ENCODE measurements at regions of chr5 and their contacts with region 1.

Region 1: DNA sequence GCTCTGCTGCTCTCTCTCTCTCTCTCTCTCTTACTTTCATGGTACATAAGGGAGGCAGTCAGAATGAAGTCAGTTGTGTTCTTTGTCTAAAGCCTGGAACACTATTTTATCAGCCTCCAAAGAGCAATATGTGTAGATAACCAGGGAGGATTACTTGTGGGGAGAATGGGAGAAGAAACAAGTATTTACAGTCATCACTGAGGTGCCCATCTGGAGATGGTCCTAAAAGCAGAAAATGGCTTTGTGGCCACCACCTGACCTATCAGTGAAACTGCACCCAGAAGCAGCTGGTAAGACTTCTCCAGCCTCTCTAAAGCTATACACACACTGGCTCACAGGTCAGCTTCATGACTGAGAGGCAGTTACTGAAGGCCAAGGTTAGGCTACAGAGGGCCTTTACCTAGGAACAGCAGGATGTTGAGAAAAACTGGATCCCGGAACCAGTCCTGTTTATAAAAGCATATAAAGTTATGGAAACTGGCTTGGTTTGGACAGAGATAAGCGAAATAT is 75.1 kb downstream of the MRPS27 start:
- DNase-seq: peak; percentile 54
- ATAC-seq: peak; percentile 83
- H3K4me3 ChIP-seq: no peak overlapping the region
- H3K27ac ChIP-seq: no peak overlapping the region
- H3K4me1 ChIP-seq: peaks cover 84% of the 10 kb centered on the region
- H3K27me3 ChIP-seq: no peaks in the 10 kb centered on the region
- CTCF ChIP-seq: peak; percentile 58
- EP300 ChIP-seq: no peak
- POLR2A ChIP-seq: no peak
- RAD21 ChIP-seq: 0 out of 2 replicates have a peak, but pooled peaks have one; percentile 17

Region 2: DNA sequence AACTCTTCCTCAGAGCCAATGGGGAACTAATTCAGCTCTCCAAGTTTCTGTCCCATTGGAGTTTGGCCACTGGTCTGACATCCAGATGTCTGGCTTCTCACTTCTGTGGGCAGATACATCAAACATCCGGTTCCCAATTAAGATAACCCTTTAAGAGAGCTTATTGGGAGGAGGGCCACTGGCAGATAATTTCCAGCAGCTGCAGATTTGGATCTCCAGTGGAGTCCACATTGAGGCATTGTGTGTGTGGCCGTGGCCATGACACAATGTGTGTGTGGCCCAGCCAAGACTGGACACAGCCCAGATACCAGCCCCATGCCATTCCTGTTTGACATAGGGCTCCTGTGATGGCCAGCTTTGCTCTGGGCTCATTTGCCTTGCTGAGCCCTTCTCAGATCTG is 248.1 kb before region 1 on chr5:
- CTCF ChIA-PET with region 1: no interaction called
- POLR2A ChIA-PET with region 1: no interaction called
- in situ Hi-C with region 1: no loop called
- intact Hi-C with region 1: no loop called
- DNase-seq: no peak
- ATAC-seq: no peak
- H3K4me3 ChIP-seq: no peak overlapping the region
- H3K27ac ChIP-seq: no peak overlapping the region
- H3K4me1 ChIP-seq: no peaks in the 10 kb centered on the region
- H3K27me3 ChIP-seq: no peaks in the 10 kb centered on the region; a peak in 1 of 5 replicates
- CTCF ChIP-seq: no peak
- EP300 ChIP-seq: no peak
- POLR2A ChIP-seq: no peak
- RAD21 ChIP-seq: no peak

Region 3: GRCh38 chr5:72138943-72139521 is 105.9 kb before region 1 on chr5:
- CTCF ChIA-PET with region 1: no interaction called
- POLR2A ChIA-PET with region 1: no interaction called
- in situ Hi-C with region 1: no loop called
- intact Hi-C with region 1: loop called (anchors 2 kb)
- DNase-seq: no peak
- ATAC-seq: no peak
- H3K4me3 ChIP-seq: no peak overlapping the region
- H3K27ac ChIP-seq: no peak overlapping the region
- H3K4me1 ChIP-seq: no peaks in the 10 kb centered on the region
- H3K27me3 ChIP-seq: no peaks in the 10 kb centered on the region
- CTCF ChIP-seq: no peak
- EP300 ChIP-seq: no peak
- POLR2A ChIP-seq: no peak
- RAD21 ChIP-seq: no peak

Region 4: GRCh38 chr5:72197393-72197792 is 47.5 kb before region 1 on chr5:
- CTCF ChIA-PET with region 1: no interaction called
- POLR2A ChIA-PET with region 1: no interaction called
- in situ Hi-C with region 1: no loop called
- intact Hi-C with region 1: loop called (anchors 2 kb)
- DNase-seq: no peak
- ATAC-seq: no peak
- H3K4me3 ChIP-seq: no peak overlapping the region
- H3K27ac ChIP-seq: no peak overlapping the region
- H3K4me1 ChIP-seq: no peaks in the 10 kb centered on the region
- H3K27me3 ChIP-seq: no peaks in the 10 kb centered on the region
- CTCF ChIP-seq: no peak
- EP300 ChIP-seq: no peak
- POLR2A ChIP-seq: no peak
- RAD21 ChIP-seq: no peak

Region 5: GRCh38 chr5:72280581-72281170 is 35.8 kb after region 1 on chr5:
- CTCF ChIA-PET with region 1: no interaction called
- POLR2A ChIA-PET with region 1: no interaction called
- in situ Hi-C with region 1: no loop called
- intact Hi-C with region 1: no loop called
- DNase-seq: no peak
- ATAC-seq: peak; percentile 38; the same call in 1 of the 3 replicates
- H3K4me3 ChIP-seq: no peak overlapping the region
- H3K27ac ChIP-seq: no peak overlapping the region
- H3K4me1 ChIP-seq: peaks cover 35% of the 10 kb centered on the region
- H3K27me3 ChIP-seq: no peaks in the 10 kb centered on the region
- CTCF ChIP-seq: peak; percentile 37; the same call in 1 of the 2 replicates
- EP300 ChIP-seq: no peak
- POLR2A ChIP-seq: no peak
- RAD21 ChIP-seq: no peak

Region 6: DNA sequence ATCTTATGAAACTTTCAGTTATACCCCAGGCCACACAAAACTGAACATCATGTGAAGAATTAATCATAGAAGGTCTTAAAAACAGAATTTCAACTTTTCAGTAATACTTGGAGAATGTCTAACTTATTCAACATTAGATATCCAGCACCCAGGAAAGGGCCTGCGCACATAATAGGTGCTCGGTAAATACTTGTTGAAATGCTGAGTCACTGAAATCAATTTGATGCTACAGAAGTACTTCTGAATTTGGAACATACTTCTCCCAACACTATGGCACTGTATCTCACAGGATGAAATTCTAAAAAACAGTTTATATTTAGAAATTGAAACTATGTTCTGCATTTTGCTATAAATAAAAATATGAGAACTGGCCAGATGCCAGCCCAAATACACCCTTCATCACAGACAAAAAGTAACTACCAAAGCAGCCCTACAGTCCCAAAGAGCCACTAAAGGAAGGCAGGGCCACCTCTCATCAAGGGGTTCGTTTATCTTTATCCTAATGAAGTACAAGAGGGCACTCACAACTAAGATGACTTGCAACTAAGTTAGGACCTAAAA is 48.7 kb after region 1 on chr5:
- CTCF ChIA-PET with region 1: no interaction called
- POLR2A ChIA-PET with region 1: no interaction called
- in situ Hi-C with region 1: no loop called
- intact Hi-C with region 1: loop called (anchors 1 kb)
- DNase-seq: no peak
- ATAC-seq: no peak
- H3K4me3 ChIP-seq: no peak overlapping the region
- H3K27ac ChIP-seq: peak overlapping the region; percentile 29
- H3K4me1 ChIP-seq: peaks cover 54% of the 10 kb centered on the region
- H3K27me3 ChIP-seq: no peaks in the 10 kb centered on the region
- CTCF ChIP-seq: no peak
- EP300 ChIP-seq: no peak
- POLR2A ChIP-seq: no peak
- RAD21 ChIP-seq: no peak

Measured in HepG2 (cell line).